Caco-2 (cell line): ENCODE measurements at regions of chr15 and their contacts with region 1.

Region 1: GRCh38 chr15:68114356-68114755 is 60.2 kb downstream of the PIAS1 start:
- DNase-seq: no peak
- H3K4me3 ChIP-seq: no peak overlapping the region
- H3K4me3 Mint-ChIP-seq: no peak overlapping the region
- H3K27ac Mint-ChIP-seq: no peak overlapping the region
- H3K4me1 ChIP-seq: peaks cover 5% of the 10 kb centered on the region; the same call in 1 of the 2 replicates
- H3K4me1 Mint-ChIP-seq: peaks cover 23% of the 10 kb centered on the region
- H3K27me3 ChIP-seq: no peaks in the 10 kb centered on the region
- H3K27me3 Mint-ChIP-seq: no peaks in the 10 kb centered on the region
- CTCF ChIP-seq: no peak

Region 2: DNA sequence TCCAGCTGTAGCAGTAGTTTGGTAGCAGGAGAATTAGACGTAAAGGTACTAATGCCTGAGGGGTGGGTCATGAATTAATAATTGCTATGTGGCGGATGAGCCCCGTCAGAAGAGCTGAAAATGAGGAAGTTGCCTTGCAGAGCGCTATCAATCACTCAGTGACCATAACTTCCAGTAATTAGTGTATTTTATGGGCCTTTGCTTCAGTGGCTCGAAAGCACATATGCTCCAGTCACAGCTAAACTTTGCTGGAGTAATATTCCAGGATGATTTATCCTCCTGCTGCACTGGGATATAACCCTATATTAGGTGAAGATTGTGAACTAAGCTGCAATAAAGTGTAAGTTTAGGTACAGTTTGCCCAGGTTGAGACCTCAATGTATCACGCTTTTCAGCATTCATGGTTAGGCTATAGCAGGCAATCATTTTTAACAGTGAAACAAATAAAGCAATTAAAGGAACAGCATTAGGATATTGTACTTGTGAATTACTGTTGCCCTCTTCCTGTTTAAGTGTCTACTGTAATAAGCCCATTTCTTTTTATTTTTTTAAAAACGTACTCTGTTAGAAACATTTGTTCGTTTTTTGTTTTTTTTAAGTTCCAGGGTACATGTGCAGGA is 393.7 kb before region 1 on chr15:
- CTCF ChIA-PET with region 1: no interaction called
- POLR2A ChIA-PET with region 1: no interaction called
- intact Hi-C with region 1: no loop called
- DNase-seq: no peak
- H3K4me3 ChIP-seq: no peak overlapping the region
- H3K4me3 Mint-ChIP-seq: no peak overlapping the region
- H3K27ac Mint-ChIP-seq: no peak overlapping the region
- H3K4me1 ChIP-seq: no peaks in the 10 kb centered on the region
- H3K4me1 Mint-ChIP-seq: no peaks in the 10 kb centered on the region
- H3K27me3 ChIP-seq: no peaks in the 10 kb centered on the region
- H3K27me3 Mint-ChIP-seq: no peaks in the 10 kb centered on the region
- CTCF ChIP-seq: no peak

Region 3: DNA sequence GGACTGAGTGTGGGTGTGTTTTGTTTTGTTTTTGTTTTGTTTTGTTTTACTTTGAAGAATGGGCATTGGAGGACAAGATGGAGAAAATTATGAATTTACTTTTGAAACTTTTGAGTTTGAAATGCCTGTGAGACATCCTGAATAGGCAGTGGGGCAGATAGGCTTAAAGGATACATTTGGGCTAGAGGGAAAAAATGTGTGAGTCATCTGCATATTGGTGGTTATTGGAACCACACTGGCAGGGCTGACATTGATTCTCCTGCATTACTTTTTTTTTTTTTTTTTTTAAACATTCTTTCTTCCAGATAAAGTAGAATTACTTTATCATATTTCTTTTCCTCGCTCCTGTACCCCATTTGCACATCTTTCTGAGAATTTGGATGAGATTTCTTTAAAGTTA is 34.7 kb after region 1 on chr15:
- CTCF ChIA-PET with region 1: no interaction called
- POLR2A ChIA-PET with region 1: no interaction called
- intact Hi-C with region 1: loop called (anchors 1 kb)
- DNase-seq: no peak
- H3K4me3 ChIP-seq: no peak overlapping the region
- H3K4me3 Mint-ChIP-seq: no peak overlapping the region
- H3K27ac Mint-ChIP-seq: no peak overlapping the region
- H3K4me1 ChIP-seq: no peaks in the 10 kb centered on the region
- H3K4me1 Mint-ChIP-seq: peaks cover 8% of the 10 kb centered on the region
- H3K27me3 ChIP-seq: no peaks in the 10 kb centered on the region
- H3K27me3 Mint-ChIP-seq: no peaks in the 10 kb centered on the region
- CTCF ChIP-seq: no peak

Region 4: DNA sequence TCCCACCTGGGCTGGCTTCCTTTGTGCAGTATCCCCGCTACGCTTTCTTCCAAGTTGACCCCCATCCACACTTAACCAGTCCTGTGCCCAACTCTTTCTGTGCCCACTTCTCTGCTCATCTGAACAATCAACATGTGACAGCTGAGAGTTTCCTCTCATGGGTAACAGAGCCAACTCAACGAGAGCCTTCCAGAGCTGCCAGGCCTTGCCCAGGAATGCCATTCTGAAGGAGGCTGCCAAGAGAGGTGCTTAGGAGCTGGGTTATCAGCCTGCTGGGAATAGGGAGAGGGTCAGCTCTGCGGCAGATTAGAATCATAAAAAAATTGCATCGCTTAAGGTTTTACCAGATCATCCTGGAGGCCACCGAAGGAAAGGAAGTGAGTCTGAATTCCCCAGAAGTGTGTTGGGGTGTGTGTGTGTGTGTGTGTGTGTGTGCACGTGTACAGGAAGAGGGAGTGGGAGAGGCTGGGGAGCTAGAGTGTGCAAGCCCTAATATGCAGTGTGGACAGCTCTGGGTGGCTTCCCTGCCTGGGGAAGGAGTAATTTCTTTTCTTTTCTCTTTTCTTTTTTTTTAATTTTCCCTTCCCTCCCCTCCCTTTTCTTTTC is 250.9 kb after region 1 on chr15:
- CTCF ChIA-PET with region 1: no interaction called
- POLR2A ChIA-PET with region 1: no interaction called
- intact Hi-C with region 1: no loop called
- DNase-seq: no peak
- H3K4me3 ChIP-seq: no peak overlapping the region
- H3K4me3 Mint-ChIP-seq: no peak overlapping the region
- H3K27ac Mint-ChIP-seq: no peak overlapping the region
- H3K4me1 ChIP-seq: no peaks in the 10 kb centered on the region; the same call in 1 of the 2 replicates
- H3K4me1 Mint-ChIP-seq: no peaks in the 10 kb centered on the region
- H3K27me3 ChIP-seq: no peaks in the 10 kb centered on the region
- H3K27me3 Mint-ChIP-seq: no peaks in the 10 kb centered on the region
- CTCF ChIP-seq: no peak